Naive thymus-derived CD4-positive, alpha-beta T cell (primary cell): ENCODE measurements at regions of chr17 and their contacts with region 1.

Region 1: GRCh38 chr17:64145757-64146417 is 15.9 kb upstream of the ERN1 start:
- DNase-seq: peak; percentile 85 to 99 (median 96)
- ATAC-seq: peak; percentile 98
- H3K4me3 ChIP-seq: peak overlapping the region; percentile 72
- H3K4me3 Mint-ChIP-seq: no peak overlapping the region
- H3K27ac ChIP-seq: peak overlapping the region; percentile 91
- H3K27ac Mint-ChIP-seq: no peak overlapping the region
- H3K4me1 ChIP-seq: peaks cover 11 to 12% of the 10 kb centered on the region in 2 donors
- H3K4me1 Mint-ChIP-seq: peaks cover 11 to 34% (median 27%) of the 10 kb centered on the region in 7 donors
- H3K27me3 ChIP-seq: no peaks in the 10 kb centered on the region
- H3K27me3 Mint-ChIP-seq: no peaks in the 10 kb centered on the region

Region 2: DNA sequence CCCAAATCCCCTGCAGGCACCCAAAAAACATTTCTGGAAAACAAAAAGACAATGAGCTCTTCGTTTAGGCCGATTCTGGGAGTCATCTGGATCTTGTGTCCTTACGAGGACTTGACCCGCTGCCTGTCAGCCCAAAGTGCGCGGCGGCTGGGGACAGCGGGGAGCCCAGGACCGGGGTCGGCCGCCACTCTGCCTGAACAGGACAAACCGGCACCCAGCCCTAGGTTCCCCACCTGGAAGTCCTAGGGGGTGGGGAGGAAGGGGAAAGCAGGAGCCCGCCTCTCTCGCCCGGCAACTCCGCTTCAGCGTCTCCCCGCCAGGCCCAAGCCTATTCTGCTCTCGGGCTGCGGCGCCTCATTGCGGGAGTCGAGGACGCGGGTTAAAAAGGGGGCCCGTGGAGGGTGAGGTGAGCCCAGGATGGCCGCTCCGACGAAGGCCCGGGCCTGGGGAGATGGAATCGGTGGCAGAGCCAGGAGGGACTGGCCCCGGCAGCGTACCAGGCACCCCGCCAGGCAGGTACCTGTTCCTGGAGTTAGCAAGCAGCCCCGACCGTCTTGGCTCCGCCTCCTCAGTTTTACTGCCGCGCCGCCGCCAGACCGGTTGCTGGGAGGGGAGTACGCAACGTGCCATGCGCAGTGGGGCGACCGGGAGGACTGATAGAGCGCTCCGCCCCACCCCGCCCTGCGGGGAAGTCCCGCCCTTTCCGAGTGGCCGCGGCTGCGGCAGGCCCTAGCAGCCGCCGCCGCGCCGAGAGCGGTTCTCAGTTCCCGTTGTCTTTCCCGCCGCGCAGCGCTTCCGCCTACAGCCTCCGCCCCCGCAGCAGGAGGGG is 404.5 kb before region 1 on chr17 and contains the start of gene STRADA:
- CTCF ChIA-PET with region 1: no interaction called
- POLR2A ChIA-PET with region 1: no interaction called
- intact Hi-C with region 1: loop called in 1 of 2 experiments (anchors 1 kb)
- DNase-seq: peak; percentile 95 to 99 (median 98)
- ATAC-seq: peak; percentile 97
- H3K4me3 ChIP-seq: peak within 1 kb of the TSS; percentile 74
- H3K4me3 Mint-ChIP-seq: peak within 1 kb of the TSS; percentile 83 to 98 (median 89)
- H3K27ac ChIP-seq: peak within 1 kb of the TSS; percentile 96
- H3K27ac Mint-ChIP-seq: peak within 1 kb of the TSS; percentile 88 to 99 (median 93)
- H3K4me1 ChIP-seq: peaks cover 0 to 8% of the 10 kb centered on the region in 2 donors
- H3K4me1 Mint-ChIP-seq: peaks cover 6 to 36% (median 24%) of the 10 kb centered on the region in 7 donors
- H3K27me3 ChIP-seq: no peaks in the 10 kb centered on the region
- H3K27me3 Mint-ChIP-seq: no peaks in the 10 kb centered on the region
- total RNA-seq, gene STRADA: 51.0 to 69.7 (median 54.2) TPM

Region 3: GRCh38 chr17:63768433-63768832 is 377.5 kb before region 1 on chr17:
- CTCF ChIA-PET with region 1: no interaction called
- POLR2A ChIA-PET with region 1: no interaction called
- intact Hi-C with region 1: no loop called
- DNase-seq: no peak
- ATAC-seq: no peak
- H3K4me3 ChIP-seq: no peak overlapping the region
- H3K4me3 Mint-ChIP-seq: peak overlapping the region in 1 of 10 donors; percentile 2
- H3K27ac ChIP-seq: no peak overlapping the region
- H3K27ac Mint-ChIP-seq: no peak overlapping the region
- H3K4me1 ChIP-seq: peaks cover 0 to 13% of the 10 kb centered on the region in 2 donors
- H3K4me1 Mint-ChIP-seq: peaks cover 20 to 74% (median 53%) of the 10 kb centered on the region in 7 donors
- H3K27me3 ChIP-seq: no peaks in the 10 kb centered on the region
- H3K27me3 Mint-ChIP-seq: peaks cover 0 to under 1% (median 0%) of the 10 kb centered on the region in 5 donors

Region 4: DNA sequence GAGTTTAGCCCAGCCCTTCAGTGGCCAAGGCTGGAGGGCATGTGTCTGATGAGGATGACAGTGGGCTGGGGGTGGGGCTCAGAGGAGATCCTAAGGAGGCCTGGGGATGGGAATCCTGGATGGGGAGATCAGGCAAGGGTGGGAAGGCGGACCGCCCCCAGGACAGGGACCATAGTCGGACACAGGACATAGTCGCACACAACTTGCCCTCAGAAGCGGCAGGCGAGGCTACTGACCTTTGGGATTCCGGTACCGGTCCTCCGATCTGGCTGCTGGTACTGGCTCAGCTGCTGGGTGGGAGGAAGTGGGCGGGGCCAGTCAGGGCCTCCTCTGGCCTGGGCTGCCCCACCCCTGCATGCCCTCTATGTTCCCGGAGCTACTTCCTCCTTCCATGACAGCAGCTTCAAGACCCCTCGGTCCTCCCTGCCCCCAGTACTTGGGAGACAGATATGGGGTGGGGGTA is 214.8 kb before region 1 on chr17:
- CTCF ChIA-PET with region 1: no interaction called
- POLR2A ChIA-PET with region 1: interaction called, 16 read pairs
- intact Hi-C with region 1: no loop called
- DNase-seq: peak; percentile 29 to 56 (median 48)
- ATAC-seq: peak; percentile 82
- H3K4me3 ChIP-seq: peak overlapping the region; percentile 85
- H3K4me3 Mint-ChIP-seq: peak overlapping the region; percentile 88 to 99 (median 96)
- H3K27ac ChIP-seq: peak overlapping the region; percentile 84
- H3K27ac Mint-ChIP-seq: peak overlapping the region; percentile 87 to 96 (median 93)
- H3K4me1 ChIP-seq: peaks cover 13 to 21% of the 10 kb centered on the region in 2 donors
- H3K4me1 Mint-ChIP-seq: peaks cover 11 to 28% (median 24%) of the 10 kb centered on the region in 7 donors
- H3K27me3 ChIP-seq: no peaks in the 10 kb centered on the region
- H3K27me3 Mint-ChIP-seq: peaks cover 0 to 5% (median 0%) of the 10 kb centered on the region in 5 donors

Region 5: DNA sequence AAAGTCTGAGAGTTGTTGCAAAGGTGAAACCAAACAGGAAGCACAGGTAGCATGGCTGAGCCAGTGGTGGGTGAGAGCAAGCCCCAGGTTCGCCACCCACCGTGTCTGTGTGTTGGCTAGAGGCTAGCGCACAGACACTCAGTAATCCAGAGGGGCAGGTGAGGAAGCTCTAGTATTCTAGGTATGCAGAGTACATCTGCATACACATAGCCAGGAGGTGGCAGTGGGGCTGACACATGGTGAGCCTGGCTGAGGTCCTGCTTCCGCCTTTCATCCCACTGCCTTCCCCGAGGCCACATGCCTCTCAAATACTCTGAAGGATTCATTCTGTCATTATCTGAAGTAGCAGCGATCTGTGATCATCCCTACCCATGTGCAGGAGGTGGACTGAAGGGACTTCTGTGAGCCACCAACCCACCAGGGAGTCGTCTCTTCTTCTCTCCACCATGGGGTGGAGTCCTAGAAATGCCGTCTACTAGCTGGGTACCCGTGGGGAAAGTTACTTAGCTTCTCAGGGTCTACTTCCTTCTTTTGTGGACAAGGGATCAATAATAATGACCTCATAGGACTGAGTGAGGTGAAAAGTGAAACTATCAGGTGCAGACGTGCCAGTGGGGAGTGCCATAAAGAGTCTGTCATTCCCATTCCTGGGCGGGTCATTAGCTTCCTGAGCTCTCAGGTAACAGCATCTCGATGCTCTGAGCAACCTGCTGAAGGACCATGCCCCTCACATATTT is 89.5 kb before region 1 on chr17:
- CTCF ChIA-PET with region 1: interaction called, 3 read pairs
- POLR2A ChIA-PET with region 1: interaction called, 65 read pairs
- intact Hi-C with region 1: loop called in 1 of 2 experiments (anchors 1 kb)
- DNase-seq: no peak
- ATAC-seq: peak; percentile 37
- H3K4me3 ChIP-seq: no peak overlapping the region
- H3K4me3 Mint-ChIP-seq: peak overlapping the region in 2 of 10 donors; percentile 2 to 59
- H3K27ac ChIP-seq: no peak overlapping the region
- H3K27ac Mint-ChIP-seq: peak overlapping the region; percentile 24 to 88 (median 79)
- H3K4me1 ChIP-seq: peaks cover 19 to 48% of the 10 kb centered on the region in 2 donors
- H3K4me1 Mint-ChIP-seq: peaks cover 17 to 70% (median 31%) of the 10 kb centered on the region in 7 donors
- H3K27me3 ChIP-seq: no peaks in the 10 kb centered on the region
- H3K27me3 Mint-ChIP-seq: no peaks in the 10 kb centered on the region

Region 6: GRCh38 chr17:64155751-64156544 is 10.1 kb after region 1 on chr17:
- CTCF ChIA-PET with region 1: no interaction called
- POLR2A ChIA-PET with region 1: interaction called, 18 read pairs
- intact Hi-C with region 1: no loop called
- DNase-seq: no peak
- ATAC-seq: no peak
- H3K4me3 ChIP-seq: no peak overlapping the region
- H3K4me3 Mint-ChIP-seq: no peak overlapping the region
- H3K27ac ChIP-seq: no peak overlapping the region
- H3K27ac Mint-ChIP-seq: no peak overlapping the region
- H3K4me1 ChIP-seq: no peaks in the 10 kb centered on the region
- H3K4me1 Mint-ChIP-seq: peaks cover 0 to 3% (median 0%) of the 10 kb centered on the region in 7 donors
- H3K27me3 ChIP-seq: no peaks in the 10 kb centered on the region
- H3K27me3 Mint-ChIP-seq: no peaks in the 10 kb centered on the region

Region 7: DNA sequence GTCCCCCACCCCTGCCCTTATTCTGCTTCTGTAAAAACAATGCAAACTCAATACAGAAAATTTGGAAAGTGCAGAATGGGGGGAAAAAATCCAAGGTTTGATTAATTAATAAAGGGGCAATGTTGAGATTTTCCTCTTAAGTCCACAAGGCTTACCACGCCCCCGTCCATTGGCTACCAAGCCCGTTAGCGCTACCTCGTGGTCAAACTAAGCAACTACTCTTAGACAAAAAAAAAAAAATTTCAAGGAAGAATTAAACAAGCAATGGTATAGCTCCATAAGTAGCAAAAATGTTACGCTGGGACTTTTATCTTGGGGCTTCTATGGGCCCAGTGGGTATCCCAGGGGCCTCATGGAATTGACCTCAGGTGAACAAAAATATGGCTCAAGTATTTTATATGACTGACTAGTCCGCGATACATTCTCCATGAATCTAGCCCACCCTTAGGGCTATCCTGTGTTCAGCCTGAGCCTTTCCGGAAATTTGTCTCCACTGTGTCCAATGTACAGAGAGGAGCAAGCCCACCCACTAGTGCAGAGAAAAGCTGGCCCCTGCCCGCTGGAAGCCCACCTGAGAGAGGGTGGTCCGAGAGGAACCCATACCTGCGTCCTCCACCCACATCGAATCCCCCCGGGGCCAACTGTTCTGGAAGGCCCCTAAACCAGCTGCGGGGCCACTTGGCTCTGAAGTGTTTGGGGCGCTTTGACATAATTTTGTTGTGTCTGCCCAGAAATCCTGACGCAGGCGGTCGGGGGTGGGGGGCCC is 136.3 kb after region 1 on chr17:
- CTCF ChIA-PET with region 1: interaction called, 7 read pairs
- POLR2A ChIA-PET with region 1: interaction called, 38 read pairs
- intact Hi-C with region 1: loop called (anchors 1 kb)
- DNase-seq: peak in 8 of 9 donors; percentile 31 to 61 (median 54)
- ATAC-seq: peak; percentile 83
- H3K4me3 ChIP-seq: no peak overlapping the region
- H3K4me3 Mint-ChIP-seq: no peak overlapping the region
- H3K27ac ChIP-seq: no peak overlapping the region
- H3K27ac Mint-ChIP-seq: peak overlapping the region in 1 of 9 donors; percentile 20
- H3K4me1 ChIP-seq: peaks cover 0 to 5% of the 10 kb centered on the region in 2 donors
- H3K4me1 Mint-ChIP-seq: peaks cover 0 to 7% (median 0%) of the 10 kb centered on the region in 7 donors
- H3K27me3 ChIP-seq: no peaks in the 10 kb centered on the region
- H3K27me3 Mint-ChIP-seq: peaks cover 0 to 8% (median 0%) of the 10 kb centered on the region in 5 donors